ENCODE measurements at regions of chr6 and their contacts with region 1.

Region 1: DNA sequence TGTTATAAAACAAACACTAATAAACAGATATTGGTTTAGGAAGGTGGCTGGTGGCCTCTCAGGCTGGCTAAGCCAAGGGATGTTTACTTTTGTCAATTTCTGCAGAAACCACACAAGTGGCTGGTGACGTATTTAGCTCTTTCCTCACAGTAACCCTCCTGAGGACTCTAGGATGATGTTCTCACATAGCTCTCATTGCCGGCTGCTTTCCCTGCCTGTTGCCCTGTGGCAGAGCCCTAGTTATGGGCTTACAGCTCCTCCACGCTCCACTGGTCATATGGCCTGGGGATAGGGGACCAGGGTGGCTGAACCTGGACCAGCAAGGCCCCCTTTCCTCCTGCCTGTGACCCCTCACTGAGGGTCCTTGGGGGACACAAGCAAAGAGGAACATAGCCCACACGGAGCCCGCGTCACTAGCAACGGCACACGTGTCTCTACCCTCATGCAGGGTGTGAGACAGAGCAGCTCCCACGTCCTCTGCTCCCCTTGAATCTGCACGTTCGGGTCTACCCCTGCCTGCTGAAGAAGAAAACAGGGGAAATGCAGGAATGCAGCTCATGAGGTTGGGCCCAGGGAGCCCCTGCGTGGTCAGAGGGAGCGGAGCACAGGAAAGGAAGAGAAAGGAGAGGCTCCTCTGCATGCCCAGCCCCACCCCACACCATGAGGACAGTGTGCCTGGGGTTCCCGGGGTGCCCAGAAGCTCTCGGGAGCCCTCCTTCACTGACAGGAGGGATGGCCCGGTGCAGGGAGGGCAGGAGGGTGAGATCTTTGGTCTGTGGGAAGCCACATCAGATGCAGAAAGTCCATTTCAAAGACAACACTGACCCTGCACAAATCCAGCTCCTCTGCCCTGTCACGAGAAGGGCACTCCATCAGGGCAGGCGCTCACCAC is 13.9 kb downstream of the RAMACL start:
- DNase-seq: peak; percentile 86
- H3K4me3 ChIP-seq: peak overlapping the region; percentile 31
- H3K27ac ChIP-seq: peak overlapping the region; percentile 90
- H3K27me3 ChIP-seq: no peaks in the 10 kb centered on the region
- CTCF ChIP-seq: no peak

Region 2: GRCh38 chr6:166097915-166098522 is 474.6 kb before region 1 on chr6:
- CTCF ChIA-PET with region 1: no interaction called
- POLR2A ChIA-PET with region 1: no interaction called
- DNase-seq: peak; percentile 59
- H3K4me3 ChIP-seq: peak overlapping the region; percentile 42
- H3K27ac ChIP-seq: no peak overlapping the region
- H3K27me3 ChIP-seq: peaks cover 8% of the 10 kb centered on the region
- CTCF ChIP-seq: peak; percentile 97

Region 3: DNA sequence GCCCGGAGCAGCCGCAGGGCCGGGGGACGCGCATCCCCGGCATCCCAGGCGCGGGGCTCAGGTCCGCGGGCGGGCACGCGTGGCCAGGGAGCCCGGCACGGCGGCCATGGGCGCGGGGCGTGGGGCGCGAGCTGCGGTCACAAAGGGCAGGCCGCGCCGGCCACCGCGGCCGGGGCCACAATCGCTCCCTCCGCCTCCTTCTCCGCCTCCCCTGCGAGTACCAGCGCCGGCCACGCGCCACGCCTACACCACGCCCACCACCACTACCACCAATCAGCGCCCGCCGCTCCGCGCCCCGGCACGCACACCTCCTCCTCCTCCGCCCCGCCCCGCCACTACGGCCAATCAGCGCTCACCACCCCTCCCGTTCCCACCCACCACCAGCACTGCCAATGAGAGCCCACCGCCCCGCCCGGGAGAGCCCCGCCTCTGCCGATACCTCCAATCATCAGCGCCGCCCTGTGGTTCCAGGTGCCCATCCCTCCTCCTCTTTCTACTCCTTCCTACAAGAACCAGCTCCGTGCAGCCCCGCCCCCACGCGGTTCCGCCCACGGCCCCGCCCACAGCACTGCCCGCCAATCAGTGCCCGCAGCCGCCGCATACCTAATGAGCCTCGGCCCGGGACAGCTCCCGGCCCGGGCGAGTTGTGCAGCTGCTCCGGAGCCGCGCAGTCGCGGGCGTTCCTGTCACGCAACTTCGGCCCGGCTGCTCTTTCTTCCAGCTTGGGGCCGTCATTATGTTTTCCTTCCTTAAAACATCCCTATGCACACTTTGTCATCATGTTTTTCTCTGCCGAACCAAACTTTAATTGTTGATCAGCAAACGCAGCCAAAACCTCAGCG is 54.6 kb after region 1 on chr6 and contains the start of gene RPS6KA2:
- CTCF ChIA-PET with region 1: no interaction called
- POLR2A ChIA-PET with region 1: interaction called, 15 read pairs
- DNase-seq: peak; percentile 99
- H3K4me3 ChIP-seq: peak within 1 kb of the TSS; percentile 85
- H3K27ac ChIP-seq: peak within 1 kb of the TSS; percentile 89
- H3K27me3 ChIP-seq: no peaks in the 10 kb centered on the region
- CTCF ChIP-seq: no peak
- polyA plus RNA-seq, gene RPS6KA2: 70.9 and 76.6 TPM in 2 replicates

Region 4: DNA sequence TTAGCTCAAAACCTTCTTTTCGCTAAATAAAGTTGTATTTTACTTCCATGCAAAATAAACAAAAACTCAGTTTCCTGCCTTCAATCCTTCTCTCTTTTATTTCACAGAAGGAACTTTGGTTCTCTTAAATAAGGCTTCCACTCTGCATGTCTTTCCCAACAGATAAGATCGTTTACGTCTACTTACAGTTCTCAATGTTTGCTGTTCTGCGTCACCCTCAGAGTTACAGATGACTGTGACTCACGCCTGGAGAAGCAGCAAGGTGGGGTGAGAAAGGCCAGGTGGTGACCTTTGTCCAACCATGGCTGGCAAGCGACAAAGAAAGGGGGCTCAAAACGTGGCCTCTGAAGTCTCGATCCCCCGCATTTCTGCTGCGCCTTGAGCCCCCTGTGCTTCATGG is 105.8 kb after region 1 on chr6:
- CTCF ChIA-PET with region 1: no interaction called
- POLR2A ChIA-PET with region 1: no interaction called
- DNase-seq: no peak
- H3K4me3 ChIP-seq: no peak overlapping the region
- H3K27ac ChIP-seq: no peak overlapping the region
- H3K27me3 ChIP-seq: peaks cover 3% of the 10 kb centered on the region
- CTCF ChIP-seq: no peak

Region 5: DNA sequence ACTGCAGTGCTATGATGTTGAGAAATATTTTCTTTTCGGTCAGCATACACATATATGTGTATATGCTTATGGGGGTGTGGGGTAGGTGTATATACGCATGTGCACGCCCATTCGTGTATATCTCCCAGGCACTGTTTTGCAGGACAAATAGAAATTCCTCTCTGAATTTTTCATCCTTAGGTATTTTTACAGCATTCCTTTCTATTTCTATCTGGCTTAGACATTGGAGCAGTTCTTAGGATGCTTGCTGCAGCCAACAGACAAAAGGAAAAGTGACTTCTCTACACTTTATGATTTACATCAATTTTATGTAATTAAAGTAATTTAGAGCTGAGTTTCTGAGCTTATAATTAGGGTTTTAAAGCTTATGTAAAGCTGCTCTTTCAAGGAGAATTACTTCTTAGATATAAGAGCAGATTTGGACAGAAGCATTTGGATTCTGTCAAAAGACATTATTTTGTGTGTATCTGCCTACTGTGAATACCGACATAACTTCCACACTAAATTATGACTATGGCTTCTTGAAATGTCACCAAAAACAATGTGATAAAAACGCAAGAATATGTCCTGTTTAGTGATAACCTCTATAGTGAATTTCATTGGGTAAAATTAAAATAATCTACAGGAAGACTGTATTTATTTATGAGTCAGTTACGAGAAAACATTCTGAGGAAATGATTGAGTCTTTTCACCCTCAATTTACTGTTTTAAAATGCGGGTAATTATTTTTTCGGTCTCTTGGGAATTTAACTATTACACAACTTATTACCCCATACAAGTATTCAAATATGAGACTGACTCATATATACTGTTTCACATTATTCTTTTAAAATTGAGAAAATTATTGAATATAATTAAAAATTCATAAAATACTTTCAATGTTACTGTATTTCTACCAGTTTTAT is 405.3 kb after region 1 on chr6:
- CTCF ChIA-PET with region 1: no interaction called
- POLR2A ChIA-PET with region 1: no interaction called
- DNase-seq: no peak
- H3K4me3 ChIP-seq: no peak overlapping the region
- H3K27ac ChIP-seq: no peak overlapping the region
- H3K27me3 ChIP-seq: no peaks in the 10 kb centered on the region
- CTCF ChIP-seq: no peak